ENCODE measurements at regions of chr20 and their contacts with region 1.

Region 1: GRCh38 chr20:49484180-49485140 is 2.0 kb upstream of the KCNB1 start:
- DNase-seq: peak; percentile 94
- H3K4me3 ChIP-seq: peak overlapping the region; percentile 65 to 72
- H3K27ac ChIP-seq: no peak overlapping the region; a peak in 1 of 4 replicates
- H3K4me1 ChIP-seq: peaks cover 0 to 13% of the 10 kb centered on the region in 2 experiments; a peak in 1 of 4 replicates
- H3K27me3 ChIP-seq: peaks cover 33% of the 10 kb centered on the region; the same call in 1 of the 2 replicates
- CTCF ChIP-seq: peak; percentile 75
- EP300 ChIP-seq: no peak; a peak in 1 of 4 replicates
- RAD21 ChIP-seq: peak; percentile 78

Region 2: DNA sequence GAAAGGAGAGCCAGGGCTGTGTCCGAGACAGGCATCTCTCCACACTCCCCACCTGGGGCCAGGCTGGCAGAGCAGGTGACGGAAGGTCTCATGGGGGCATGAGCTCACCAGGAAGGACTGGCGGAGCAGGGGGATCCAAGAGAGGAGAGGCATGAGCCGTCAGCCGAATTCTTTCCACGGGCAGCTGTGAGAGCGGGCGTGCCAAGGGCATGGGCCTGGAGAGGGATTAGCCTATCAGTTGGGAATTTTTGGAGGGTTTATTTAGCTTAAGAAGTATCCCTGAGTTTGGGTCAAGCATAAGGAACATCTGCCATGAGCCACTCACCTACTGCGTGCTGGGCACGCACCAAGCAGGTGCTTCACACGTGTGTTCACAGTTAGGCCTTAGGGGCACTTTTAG is 146.4 kb before region 1 on chr20:
- CTCF ChIA-PET with region 1: interaction called, 141 read pairs
- POLR2A ChIA-PET with region 1: interaction called, 5 read pairs
- DNase-seq: no peak
- H3K4me3 ChIP-seq: no peak overlapping the region
- H3K27ac ChIP-seq: no peak overlapping the region
- H3K4me1 ChIP-seq: peaks cover 0 to 2% of the 10 kb centered on the region in 2 experiments; a peak in 1 of 4 replicates
- H3K27me3 ChIP-seq: no peaks in the 10 kb centered on the region
- CTCF ChIP-seq: no peak
- EP300 ChIP-seq: no peak
- RAD21 ChIP-seq: no peak

Region 3: DNA sequence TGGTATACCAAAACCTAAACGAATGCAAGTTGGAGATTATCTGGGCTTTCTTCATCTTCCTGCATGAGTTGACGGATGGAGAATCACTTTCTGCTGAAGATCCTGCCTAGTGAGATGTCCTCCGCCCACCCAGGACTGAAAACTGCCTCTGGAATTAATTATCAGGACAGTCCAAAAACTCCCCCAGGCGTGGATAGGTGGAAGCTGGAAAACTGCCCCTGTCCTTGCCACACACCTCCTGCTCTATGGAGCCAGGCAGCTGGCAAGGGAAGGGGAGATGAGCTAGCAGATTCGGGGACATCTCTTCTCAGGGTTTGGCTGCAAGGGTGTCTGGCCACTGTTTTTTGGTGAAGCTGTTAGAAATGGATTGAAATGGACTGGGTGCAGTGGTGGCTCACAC is 117.3 kb before region 1 on chr20:
- CTCF ChIA-PET with region 1: interaction called, 13 read pairs
- POLR2A ChIA-PET with region 1: interaction called, 3 read pairs
- DNase-seq: peak; percentile 47
- H3K4me3 ChIP-seq: no peak overlapping the region
- H3K27ac ChIP-seq: peak overlapping the region in 1 of 2 experiments; percentile 72; a peak in 2 of 4 replicates
- H3K4me1 ChIP-seq: peaks cover 0 to 24% of the 10 kb centered on the region in 2 experiments; a peak in 2 of 4 replicates
- H3K27me3 ChIP-seq: peaks cover 4% of the 10 kb centered on the region; the same call in 1 of the 2 replicates
- CTCF ChIP-seq: no peak
- EP300 ChIP-seq: 0 out of 4 replicates have a peak, but pooled peaks of 1 of the 2 experiments have one; percentile 4
- RAD21 ChIP-seq: no peak

Region 4: DNA sequence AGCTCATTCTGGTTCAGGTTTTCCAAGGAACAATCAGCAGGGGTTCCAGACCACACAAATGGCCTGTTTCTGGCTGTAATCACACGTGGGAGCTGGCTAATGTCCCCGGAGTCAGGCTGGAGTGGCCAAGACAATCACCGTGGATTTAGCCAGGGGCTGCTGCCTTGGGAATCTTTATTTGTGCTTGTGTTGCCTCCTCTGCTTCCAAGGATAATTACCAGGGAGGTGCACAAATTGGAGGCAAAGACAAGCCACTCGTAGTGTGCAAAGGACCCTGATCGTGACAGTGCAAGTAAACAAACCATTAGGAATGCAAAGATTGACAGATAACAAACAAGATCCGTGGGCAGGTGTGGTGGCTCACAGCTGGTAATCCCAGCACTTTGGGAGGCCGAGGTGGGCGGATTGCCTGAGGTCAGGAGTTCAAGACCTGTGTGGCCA is 79.3 kb before region 1 on chr20:
- CTCF ChIA-PET with region 1: interaction called, 10 read pairs
- POLR2A ChIA-PET with region 1: no interaction called
- DNase-seq: no peak
- H3K4me3 ChIP-seq: no peak overlapping the region
- H3K27ac ChIP-seq: no peak overlapping the region
- H3K4me1 ChIP-seq: peaks cover 0 to 3% of the 10 kb centered on the region in 2 experiments; a peak in 1 of 4 replicates
- H3K27me3 ChIP-seq: no peaks in the 10 kb centered on the region
- CTCF ChIP-seq: no peak
- EP300 ChIP-seq: no peak
- RAD21 ChIP-seq: no peak

Region 5: DNA sequence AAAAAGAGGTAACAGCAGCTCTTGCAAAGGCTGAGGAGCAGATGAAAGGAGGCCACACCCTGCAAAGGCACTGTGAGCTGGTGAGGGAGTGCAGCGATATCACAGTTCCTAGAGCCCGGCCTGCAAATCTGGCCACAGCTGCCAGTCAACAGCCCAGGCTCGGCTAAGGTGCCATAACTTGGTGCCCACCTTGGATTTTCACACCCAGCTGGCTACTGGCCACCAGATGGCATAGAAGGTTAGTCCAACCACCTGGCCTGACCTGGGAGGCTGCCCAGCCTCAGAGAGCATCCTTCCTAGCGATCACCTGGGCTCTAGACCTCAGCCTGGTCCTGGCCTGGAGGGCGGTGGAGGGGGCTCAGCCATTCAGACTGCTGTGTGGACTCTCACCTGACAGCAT is 48.8 kb before region 1 on chr20:
- CTCF ChIA-PET with region 1: interaction called, 13 read pairs
- POLR2A ChIA-PET with region 1: no interaction called
- DNase-seq: no peak
- H3K4me3 ChIP-seq: no peak overlapping the region
- H3K27ac ChIP-seq: no peak overlapping the region
- H3K4me1 ChIP-seq: peaks cover 0 to 18% of the 10 kb centered on the region in 2 experiments; a peak in 1 of 4 replicates
- H3K27me3 ChIP-seq: no peaks in the 10 kb centered on the region; the same call in 1 of the 2 replicates
- CTCF ChIP-seq: no peak
- EP300 ChIP-seq: no peak
- RAD21 ChIP-seq: no peak

Region 6: DNA sequence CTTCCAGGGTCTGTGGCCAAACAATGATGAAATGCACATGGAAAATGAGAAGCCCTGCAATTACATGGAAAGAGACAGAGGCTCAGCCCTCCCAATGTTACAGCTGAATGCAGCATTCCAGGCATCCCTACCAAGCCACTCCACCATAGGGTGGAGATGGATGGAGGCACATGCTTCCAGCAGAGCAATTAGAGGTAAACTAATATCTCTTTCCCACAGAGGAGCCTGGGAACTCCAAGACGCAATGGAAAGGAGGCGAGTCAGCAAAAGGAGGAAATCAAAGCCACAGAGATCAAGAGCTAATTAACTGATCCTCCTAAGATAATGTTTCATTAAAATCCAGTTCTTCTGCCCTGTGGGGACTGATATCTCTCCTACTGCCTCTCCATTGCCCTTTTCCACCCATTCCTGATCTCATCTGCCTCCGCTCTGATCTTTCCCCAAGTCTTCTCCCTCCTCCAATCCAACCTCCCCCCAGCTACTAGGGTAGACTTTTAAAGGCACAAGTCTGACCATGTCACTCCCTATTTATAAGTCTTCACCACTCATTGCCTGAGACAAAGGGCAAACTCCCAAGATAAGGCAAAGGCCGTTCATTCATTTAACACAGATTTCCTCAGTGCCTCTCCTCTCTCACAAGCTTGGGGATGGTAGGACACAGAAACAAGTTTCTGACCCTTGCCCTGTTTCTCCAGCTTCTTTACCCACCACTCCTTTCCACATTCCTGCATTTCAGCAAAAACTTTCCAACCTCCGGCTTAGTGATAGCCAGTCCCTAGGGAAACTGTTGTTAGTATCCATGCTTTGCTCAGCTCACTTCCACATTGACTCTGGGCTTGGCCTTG is 12.3 kb after region 1 on chr20:
- CTCF ChIA-PET with region 1: interaction called, 115 read pairs
- POLR2A ChIA-PET with region 1: no interaction called
- DNase-seq: no peak
- H3K4me3 ChIP-seq: no peak overlapping the region
- H3K27ac ChIP-seq: no peak overlapping the region
- H3K4me1 ChIP-seq: no peaks in the 10 kb centered on the region
- H3K27me3 ChIP-seq: peaks cover 12% of the 10 kb centered on the region
- CTCF ChIP-seq: no peak
- EP300 ChIP-seq: no peak
- RAD21 ChIP-seq: no peak

Region 7: DNA sequence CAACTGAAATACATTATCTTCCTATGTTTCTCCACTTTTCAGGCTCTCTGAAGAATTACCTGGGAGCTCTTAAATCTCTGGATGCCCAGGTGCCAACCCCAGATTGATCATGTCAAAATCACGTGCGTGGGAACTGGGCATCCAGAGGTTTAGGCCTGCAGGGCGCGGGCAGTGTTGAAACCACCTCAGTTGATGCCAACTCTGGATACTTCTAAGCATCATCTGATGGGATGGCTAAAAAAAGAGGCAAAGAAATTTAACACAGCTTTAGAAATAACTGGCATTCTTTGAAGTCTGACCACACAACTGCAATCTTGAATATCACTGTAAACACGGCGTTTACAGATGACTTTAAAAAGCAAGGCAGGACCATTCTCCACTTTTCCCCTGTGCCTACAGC is 41.6 kb after region 1 on chr20:
- CTCF ChIA-PET with region 1: interaction called, 13 read pairs
- POLR2A ChIA-PET with region 1: no interaction called
- DNase-seq: no peak
- H3K4me3 ChIP-seq: no peak overlapping the region
- H3K27ac ChIP-seq: no peak overlapping the region
- H3K4me1 ChIP-seq: no peaks in the 10 kb centered on the region
- H3K27me3 ChIP-seq: no peaks in the 10 kb centered on the region
- CTCF ChIP-seq: no peak
- EP300 ChIP-seq: no peak
- RAD21 ChIP-seq: no peak

Measured in SK-N-SH (cell line).